Heart right ventricle (tissue), 16 donors: ENCODE measurements at regions of chr2 and their contacts with region 1.

Region 1: DNA sequence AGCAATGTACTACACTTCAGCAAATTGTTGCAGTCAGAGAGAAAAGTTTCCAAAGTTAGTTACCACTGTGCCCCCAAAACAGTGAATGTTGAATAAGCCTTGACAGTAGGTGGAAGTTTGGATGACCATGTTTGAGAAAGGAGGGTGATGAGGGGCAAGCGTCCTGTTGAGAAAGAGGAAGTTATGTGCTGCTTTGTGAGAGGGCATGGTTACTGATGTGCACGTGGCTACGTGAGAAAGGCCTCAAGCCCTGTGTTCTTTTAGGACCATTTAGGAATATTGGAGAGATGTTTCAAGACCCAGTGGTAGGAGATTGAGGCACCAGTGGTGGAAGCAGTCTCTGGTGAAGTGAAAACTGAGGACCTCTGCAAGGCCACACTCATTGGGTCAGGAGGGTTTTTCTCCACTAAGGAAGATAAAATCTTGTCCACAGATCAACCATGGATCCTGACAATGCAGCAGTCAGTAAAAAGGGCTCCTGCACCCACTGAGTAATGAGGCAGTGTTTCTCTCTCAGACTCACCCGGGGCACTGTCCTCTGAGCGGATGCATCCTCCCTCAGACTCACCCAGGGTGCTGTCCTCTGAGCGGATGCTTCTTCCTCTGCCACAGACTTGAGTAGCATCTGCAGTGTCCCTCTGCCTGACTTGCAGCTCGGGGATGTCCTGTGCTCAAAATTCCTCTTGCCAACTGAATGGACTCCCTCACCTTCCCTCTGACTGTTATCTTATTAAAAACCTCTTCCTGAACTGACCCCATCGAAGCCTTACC is 34.7 kb upstream of the ACTR3 start:
- DNase-seq: no peak
- ATAC-seq: no peak
- H3K4me3 ChIP-seq: no peak overlapping the region
- H3K27ac ChIP-seq: no peak overlapping the region
- H3K4me1 ChIP-seq: peaks cover 0 to 52% (median 0%) of the 10 kb centered on the region in 9 donors
- H3K27me3 ChIP-seq: no peaks in the 10 kb centered on the region
- CTCF ChIP-seq: no peak

Region 2: GRCh38 chr2:113257516-113258264 is 597.5 kb before region 1 on chr2:
- intact Hi-C with region 1: loop called in 1 of 10 experiments (anchors 5 kb)
- DNase-seq: no peak
- ATAC-seq: peak; percentile 45 to 84 (median 66)
- H3K4me3 ChIP-seq: no peak overlapping the region
- H3K27ac ChIP-seq: no peak overlapping the region
- H3K4me1 ChIP-seq: peaks cover 0 to 38% (median 6%) of the 10 kb centered on the region in 9 donors
- H3K27me3 ChIP-seq: peaks cover 0 to 17% (median 0%) of the 10 kb centered on the region in 7 donors
- CTCF ChIP-seq: no peak

Region 3: GRCh38 chr2:113889471-113890252 is 34.5 kb after region 1 on chr2 and contains the start of gene ACTR3:
- intact Hi-C with region 1: no loop called
- DNase-seq: peak; percentile 98
- ATAC-seq: peak; percentile 98 to 99 (median 98)
- H3K4me3 ChIP-seq: peak within 1 kb of the TSS; percentile 78 to 98 (median 96)
- H3K27ac ChIP-seq: peak within 1 kb of the TSS; percentile 81 to 100 (median 98)
- H3K4me1 ChIP-seq: peaks cover 3 to 75% (median 61%) of the 10 kb centered on the region in 9 donors
- H3K27me3 ChIP-seq: no peaks in the 10 kb centered on the region
- CTCF ChIP-seq: peak in 3 of 9 donors; percentile 17 to 31 (median 23)
- total RNA-seq, gene ACTR3: 97.0 to 167 (median 116) TPM